Activated CD4-positive, alpha-beta T cell treated with anti-CD3 and anti-CD28 coated beads for 36 hours (primary cell): ENCODE measurements at regions of chr10 and their contacts with region 1.

Region 1: DNA sequence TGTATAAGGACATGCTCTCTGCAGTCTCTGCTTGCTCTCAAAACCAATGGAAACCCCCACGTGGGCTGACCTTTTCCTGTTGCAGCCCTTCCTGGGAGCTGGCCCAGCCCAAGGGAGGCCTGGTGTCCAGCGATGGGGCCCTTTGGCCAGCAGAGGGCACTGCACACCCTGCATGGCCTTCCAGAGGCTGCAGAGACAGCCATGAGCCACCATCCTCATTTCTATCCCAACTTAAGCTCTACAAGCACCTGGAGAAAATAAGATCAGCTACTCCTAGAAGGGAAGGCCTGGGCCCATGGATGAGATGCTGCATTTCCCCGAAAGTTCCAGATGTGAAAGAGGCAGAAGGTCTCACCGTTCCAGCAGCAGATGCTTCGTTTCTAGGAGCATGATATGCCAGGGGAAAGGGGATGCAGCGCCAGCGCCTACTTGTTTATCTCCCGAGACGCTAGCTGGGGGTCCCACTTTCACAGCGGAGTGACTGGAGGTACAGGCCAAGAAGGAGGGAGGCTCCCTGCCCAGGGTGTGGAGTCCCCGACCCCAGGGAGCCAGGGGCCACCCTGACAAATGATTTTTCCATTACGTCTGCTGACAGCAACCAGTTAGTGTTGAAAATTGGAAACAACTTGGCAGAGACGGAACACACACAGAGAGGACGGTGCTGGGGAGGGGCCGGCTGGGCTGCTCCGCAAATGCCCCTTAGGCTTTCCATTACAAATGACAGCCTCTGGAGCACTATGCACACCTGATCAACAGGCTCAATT is 106.4 kb downstream of the ZRANB1 start:
- DNase-seq: peak; percentile 85
- ATAC-seq: peak; percentile 93
- H3K4me3 Mint-ChIP-seq: no peak overlapping the region
- H3K27ac Mint-ChIP-seq: no peak overlapping the region
- H3K4me1 Mint-ChIP-seq: no peaks in the 10 kb centered on the region
- H3K27me3 Mint-ChIP-seq: peaks cover 6% of the 10 kb centered on the region

Region 2: DNA sequence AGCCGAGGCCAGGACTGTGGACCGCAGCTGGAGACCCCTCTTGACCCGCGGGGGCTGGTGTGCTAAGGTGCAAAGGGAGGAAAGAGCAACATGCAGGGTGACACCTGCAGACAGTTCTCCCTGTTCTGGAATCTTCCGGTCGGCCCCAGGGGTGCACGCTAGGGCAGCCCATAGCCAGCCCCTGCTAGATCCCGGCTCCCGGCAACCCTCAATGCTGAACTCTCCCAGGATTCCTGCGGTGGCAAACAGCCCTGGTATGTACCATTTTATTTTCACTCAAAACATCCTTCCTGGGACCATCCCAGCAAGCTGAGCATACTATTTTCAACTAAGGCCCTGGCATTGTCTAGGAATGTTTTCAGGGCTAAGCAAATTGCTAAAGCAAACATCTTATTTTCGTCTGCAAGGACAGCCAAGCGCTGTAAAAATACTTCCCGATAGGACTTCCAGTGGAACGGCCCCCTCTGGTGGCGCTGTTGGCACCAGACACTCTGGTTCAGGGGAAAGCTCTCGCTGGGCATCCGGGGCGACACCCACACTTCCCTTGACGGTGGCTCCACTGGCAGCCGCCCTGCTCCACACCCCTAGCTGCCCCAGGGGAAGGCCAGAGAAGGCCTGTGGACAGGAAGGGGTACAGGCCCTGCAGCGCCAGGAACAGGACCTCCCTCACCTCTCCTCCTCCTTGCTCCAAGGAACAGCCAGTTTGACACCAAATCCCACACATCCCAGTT is 12.7 kb after region 1 on chr10:
- CTCF ChIA-PET with region 1: interaction called, 14 read pairs
- POLR2A ChIA-PET with region 1: no interaction called
- intact Hi-C with region 1: no loop called
- DNase-seq: peak; percentile 71
- ATAC-seq: peak; percentile 45
- H3K4me3 Mint-ChIP-seq: no peak overlapping the region
- H3K27ac Mint-ChIP-seq: no peak overlapping the region
- H3K4me1 Mint-ChIP-seq: peaks cover 15% of the 10 kb centered on the region
- H3K27me3 Mint-ChIP-seq: peaks cover 30% of the 10 kb centered on the region

Region 3: DNA sequence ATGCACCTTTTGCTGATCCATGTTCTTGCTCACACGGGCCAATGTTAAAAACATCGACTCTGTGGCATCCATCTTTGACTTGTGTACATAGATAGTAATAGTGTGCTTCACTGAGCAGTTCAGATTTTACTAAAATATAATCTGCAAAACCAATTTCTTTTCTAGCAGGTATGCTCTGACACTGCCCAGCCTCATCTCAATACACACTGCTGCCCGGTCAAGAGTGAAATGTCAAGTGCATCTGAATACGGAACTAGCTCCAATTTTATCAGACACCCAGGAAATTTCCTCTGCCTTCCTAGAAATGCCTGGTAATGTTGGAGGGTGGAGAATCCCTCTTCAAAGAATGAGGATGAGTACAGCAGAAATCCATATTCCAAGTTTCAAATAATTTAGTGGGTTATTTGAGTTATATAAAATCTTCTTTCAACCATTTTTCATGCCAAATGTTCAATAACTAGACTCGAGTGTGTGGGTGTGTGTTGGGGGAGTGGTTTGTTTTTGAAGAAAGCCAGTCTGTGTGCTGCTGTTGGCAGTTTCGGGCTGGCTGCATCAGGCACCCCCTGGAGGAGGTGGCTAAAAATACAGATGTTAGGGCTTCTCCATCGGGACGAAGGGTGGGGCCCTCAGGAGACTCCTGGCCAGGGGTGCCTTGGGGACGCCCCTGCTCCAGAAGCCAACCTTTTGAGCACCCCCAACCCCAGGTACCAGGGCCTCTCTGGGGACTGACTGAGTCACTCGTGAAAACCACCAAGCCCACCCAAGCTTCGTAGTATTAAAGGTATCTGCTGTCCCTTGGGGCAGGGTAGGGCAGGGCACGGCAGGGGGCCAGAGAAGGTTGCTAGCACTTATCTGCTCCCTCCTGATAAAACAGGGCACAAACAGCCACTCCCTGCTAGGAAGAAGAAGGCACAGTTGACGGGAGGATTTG is 96.7 kb after region 1 on chr10:
- CTCF ChIA-PET with region 1: no interaction called
- POLR2A ChIA-PET with region 1: no interaction called
- intact Hi-C with region 1: loop called in 1 of 2 experiments (anchors 5 kb)
- DNase-seq: peak; percentile 34
- ATAC-seq: peak; percentile 53
- H3K4me3 Mint-ChIP-seq: no peak overlapping the region
- H3K27ac Mint-ChIP-seq: no peak overlapping the region
- H3K4me1 Mint-ChIP-seq: no peaks in the 10 kb centered on the region
- H3K27me3 Mint-ChIP-seq: peaks cover 27% of the 10 kb centered on the region

Region 4: DNA sequence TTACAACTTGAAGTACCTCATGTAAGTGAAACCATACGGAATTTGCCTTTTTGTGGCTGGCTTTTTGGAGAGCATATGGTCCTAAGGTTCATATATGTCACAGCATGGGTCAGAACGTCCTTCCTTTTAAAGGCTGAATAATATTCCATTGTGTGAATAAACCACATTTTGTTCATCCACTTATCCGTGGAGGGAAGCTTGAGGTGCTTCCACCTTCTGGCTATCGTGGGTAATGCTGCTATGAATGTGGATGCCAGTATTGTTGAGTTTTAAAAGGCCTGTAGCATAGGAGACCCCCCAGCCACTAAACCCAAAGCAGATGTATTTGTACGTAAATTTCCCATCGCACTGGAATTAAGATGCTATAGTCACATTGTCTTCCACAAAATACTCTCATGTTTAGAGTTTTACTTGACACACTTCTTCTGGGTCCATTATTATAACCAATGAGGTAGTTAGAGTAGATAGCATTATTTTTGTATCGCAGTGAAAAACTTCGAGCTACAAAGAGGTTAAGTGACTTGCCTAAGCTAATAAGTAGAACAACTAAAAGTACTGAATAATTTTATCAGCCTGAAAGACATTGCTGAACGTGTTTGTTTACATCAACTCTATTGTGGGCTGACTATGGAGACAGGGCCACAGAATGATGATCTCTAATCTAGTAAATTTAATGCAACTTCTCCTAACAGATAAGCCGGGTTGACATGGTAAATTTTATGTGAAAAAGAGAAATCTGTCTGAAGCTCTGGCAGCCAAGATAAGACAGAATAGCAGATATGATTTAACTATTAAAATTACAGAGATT is 295.0 kb after region 1 on chr10:
- CTCF ChIA-PET with region 1: interaction called, 6 read pairs
- POLR2A ChIA-PET with region 1: no interaction called
- intact Hi-C with region 1: loop called (anchors 1 kb)
- DNase-seq: peak; percentile 12
- ATAC-seq: no peak
- H3K4me3 Mint-ChIP-seq: no peak overlapping the region
- H3K27ac Mint-ChIP-seq: no peak overlapping the region
- H3K4me1 Mint-ChIP-seq: no peaks in the 10 kb centered on the region
- H3K27me3 Mint-ChIP-seq: peaks cover 5% of the 10 kb centered on the region